A673 (cell line): ENCODE measurements at regions of chr19 and their contacts with region 1.

Region 1: GRCh38 chr19:13588957-13589833 is 82.9 kb upstream of the CACNA1A start:
- DNase-seq: peak; percentile 85
- H3K4me3 ChIP-seq: no peak overlapping the region
- H3K27ac ChIP-seq: no peak overlapping the region
- H3K4me1 ChIP-seq: no peaks in the 10 kb centered on the region
- H3K27me3 ChIP-seq: no peaks in the 10 kb centered on the region
- CTCF ChIP-seq: peak; percentile 97

Region 2: GRCh38 chr19:13707915-13708314 is 118.7 kb after region 1 on chr19:
- CTCF ChIA-PET with region 1: interaction called, 21 read pairs
- POLR2A ChIA-PET with region 1: no interaction called
- intact Hi-C with region 1: no loop called
- DNase-seq: no peak
- H3K4me3 ChIP-seq: no peak overlapping the region
- H3K27ac ChIP-seq: no peak overlapping the region
- H3K4me1 ChIP-seq: peaks cover 10% of the 10 kb centered on the region
- H3K27me3 ChIP-seq: no peaks in the 10 kb centered on the region
- CTCF ChIP-seq: no peak